ENCODE measurements at regions of chrX and their contacts with region 1.

Region 1: DNA sequence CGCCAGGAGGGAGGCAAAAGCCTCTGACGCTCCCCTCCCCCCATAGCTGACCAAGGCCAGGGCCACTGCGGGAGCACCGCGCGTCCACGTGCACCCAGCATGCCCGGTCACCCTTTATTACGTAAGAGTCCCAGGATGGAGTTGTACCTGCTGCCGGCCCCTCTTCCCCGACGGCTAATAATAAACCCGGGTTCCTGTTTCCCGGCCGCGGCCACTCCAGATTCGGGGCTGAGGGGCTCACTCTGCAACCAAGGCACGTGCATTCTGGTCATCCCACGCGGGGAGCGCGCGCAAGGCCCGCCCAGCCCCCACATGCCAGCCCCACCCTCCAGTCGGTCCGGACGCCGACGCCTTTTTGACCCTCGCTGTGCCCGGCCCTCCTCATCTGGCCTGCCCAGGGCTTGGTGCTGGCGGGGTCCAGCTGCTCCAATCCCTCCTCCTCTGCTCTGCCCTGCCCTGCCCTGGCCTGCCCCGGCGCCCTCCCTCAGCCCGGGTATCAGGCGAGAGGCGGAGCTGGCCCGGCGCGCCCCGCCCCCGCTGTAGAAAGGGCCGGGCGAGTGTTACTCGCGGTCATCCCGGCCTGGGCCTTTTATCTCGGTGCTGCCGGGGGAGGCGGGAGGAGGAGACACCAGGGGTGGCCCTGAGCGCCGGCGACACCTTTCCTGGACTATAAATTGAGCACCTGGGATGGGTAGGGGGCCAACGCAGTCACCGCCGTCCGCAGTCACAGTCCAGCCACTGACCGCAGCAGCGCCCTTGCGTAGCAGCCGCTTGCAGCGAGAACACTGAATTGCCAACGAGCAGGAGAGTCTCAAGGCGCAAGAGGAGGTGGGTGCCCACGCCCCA is 2.5 kb downstream of the MID1IP1 start:
- DNase-seq: peak; percentile 49 to 90
- H3K4me3 ChIP-seq: peak overlapping the region; percentile 66 to 78
- H3K27ac ChIP-seq: peak overlapping the region; percentile 80 to 91
- H3K4me1 ChIP-seq: peaks cover 0 to 5% of the 10 kb centered on the region in 2 donors
- H3K27me3 ChIP-seq: no peaks in the 10 kb centered on the region
- CTCF ChIP-seq: no peak

Region 2: GRCh38 chrX:38717871-38718270 is 85.9 kb before region 1 on chrX:
- intact Hi-C with region 1: no loop called
- DNase-seq: no peak
- H3K4me3 ChIP-seq: no peak overlapping the region
- H3K27ac ChIP-seq: no peak overlapping the region
- H3K4me1 ChIP-seq: no peaks in the 10 kb centered on the region
- H3K27me3 ChIP-seq: peaks cover 4% of the 10 kb centered on the region
- CTCF ChIP-seq: peak in 1 of 3 experiments; percentile 22

Region 3: DNA sequence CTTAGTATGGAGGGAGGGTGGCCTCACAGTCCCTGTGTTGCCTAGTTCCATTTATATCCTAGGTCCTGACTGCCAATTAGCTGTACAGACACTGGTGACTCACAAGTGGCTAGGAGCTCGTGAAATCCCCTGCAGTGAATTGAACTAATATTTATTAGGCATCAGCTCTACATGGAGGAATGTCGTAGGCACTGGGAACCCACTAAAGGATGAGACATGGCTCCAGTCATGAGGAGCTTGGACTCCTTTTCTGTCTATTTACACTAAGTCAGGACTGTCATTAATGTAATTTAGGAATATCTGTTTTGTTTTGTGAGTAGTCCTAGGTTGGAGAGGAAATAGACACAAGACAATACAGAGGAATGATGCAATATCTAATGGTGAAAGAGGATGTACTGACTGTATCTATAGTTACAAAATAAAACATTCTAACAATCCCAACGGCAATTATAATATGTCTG is 65.2 kb after region 1 on chrX:
- intact Hi-C with region 1: loop called (anchors 2 kb)
- DNase-seq: peak in 1 of 2 donors; percentile 65
- H3K4me3 ChIP-seq: no peak overlapping the region
- H3K27ac ChIP-seq: peak overlapping the region; percentile 34 to 59
- H3K4me1 ChIP-seq: peaks cover 0 to 6% of the 10 kb centered on the region in 2 donors
- H3K27me3 ChIP-seq: no peaks in the 10 kb centered on the region
- CTCF ChIP-seq: no peak

Region 4: DNA sequence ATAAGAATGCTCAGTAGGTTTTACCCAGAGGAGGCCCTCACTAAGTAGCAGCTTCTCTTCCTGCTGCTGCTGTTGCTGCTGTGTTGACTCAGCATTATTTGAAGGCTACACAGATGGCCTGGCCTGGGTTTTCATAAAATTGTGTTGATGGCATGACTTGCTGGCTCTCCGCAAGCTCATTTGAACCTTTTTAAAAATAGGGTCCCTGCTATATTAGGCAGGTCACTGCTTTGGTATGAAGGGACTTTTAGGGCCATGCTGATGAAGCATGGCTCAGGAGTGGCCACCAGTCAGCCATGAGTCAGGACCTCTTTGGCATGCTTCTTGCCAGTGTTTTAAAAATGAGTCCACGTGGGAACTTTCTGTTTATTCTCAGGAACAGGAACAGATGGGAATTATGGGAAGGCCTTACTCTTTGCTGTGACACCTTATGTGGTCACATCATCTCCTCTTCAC is 126.2 kb after region 1 on chrX:
- intact Hi-C with region 1: loop called (anchors 2 kb)
- DNase-seq: peak; percentile 14 to 81
- H3K4me3 ChIP-seq: no peak overlapping the region
- H3K27ac ChIP-seq: peak overlapping the region; percentile 56 to 64
- H3K4me1 ChIP-seq: peaks cover 0 to 5% of the 10 kb centered on the region in 2 donors
- H3K27me3 ChIP-seq: no peaks in the 10 kb centered on the region
- CTCF ChIP-seq: no peak

Region 5: DNA sequence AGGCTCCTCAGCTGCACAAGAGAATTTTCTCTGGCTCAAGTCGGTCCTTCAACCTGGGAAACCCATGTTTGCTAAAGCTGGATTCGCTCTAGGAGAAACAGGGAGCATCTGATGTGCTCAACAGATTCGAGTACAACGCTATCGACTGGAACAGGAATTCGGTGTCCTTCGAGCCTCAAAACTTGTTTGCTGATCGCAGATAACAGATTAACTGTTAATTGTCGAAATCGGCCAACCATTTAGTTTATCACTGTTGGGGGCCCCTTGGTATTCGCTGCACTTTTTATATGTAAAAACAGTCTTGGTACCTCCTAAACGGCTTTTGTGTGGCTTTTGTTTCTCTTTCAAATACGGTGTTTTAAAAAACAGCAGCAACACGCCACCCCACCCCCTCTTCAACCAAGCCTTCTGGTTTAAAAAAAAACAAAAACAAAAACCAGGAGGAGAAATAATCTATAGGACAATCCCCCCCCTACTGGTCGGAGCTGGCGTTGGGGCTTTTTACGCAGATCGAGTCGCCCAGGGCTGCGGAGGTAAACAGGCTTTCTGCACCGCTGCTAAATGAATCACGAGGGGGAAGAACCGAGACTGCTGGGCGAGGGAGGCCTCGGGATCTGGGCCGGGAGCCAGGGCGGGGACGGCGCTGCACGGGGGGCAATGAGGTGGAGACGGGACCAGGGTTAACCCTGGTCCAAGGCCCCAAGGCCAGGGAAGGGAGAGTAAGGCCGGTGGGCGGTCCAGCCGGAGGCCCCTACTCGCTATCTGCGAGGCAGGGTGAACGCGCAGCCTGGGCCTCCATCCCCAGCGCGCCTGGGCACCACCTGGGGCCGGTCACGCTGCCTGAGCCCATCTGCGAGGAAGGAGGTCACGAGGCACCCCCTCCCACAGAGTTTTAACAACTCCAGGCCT is 1365.6 kb after region 1 on chrX:
- intact Hi-C with region 1: loop called (anchors 10 kb)
- DNase-seq: peak in 1 of 2 donors; percentile 66
- H3K4me3 ChIP-seq: no peak overlapping the region
- H3K27ac ChIP-seq: no peak overlapping the region
- H3K4me1 ChIP-seq: peaks cover 3 to 11% of the 10 kb centered on the region in 2 donors
- H3K27me3 ChIP-seq: no peaks in the 10 kb centered on the region
- CTCF ChIP-seq: peak in 1 of 3 experiments; percentile 20

Measured in ascending aorta (tissue), 2 donors.